AG04450 (cell line): ENCODE measurements at regions of chr9 and their contacts with region 1.

Region 1: GRCh38 chr9:115117999-115118878 is at the start of gene TNC:
- DNase-seq: peak; percentile 79
- H3K4me3 ChIP-seq: peak within 1 kb of the TSS; percentile 77
- H3K27ac ChIP-seq: peak within 1 kb of the TSS; percentile 92
- H3K27me3 ChIP-seq: no peaks in the 10 kb centered on the region
- CTCF ChIP-seq: no peak
- polyA plus RNA-seq, gene TNC: 265 and 319 TPM in 2 replicates

Region 2: DNA sequence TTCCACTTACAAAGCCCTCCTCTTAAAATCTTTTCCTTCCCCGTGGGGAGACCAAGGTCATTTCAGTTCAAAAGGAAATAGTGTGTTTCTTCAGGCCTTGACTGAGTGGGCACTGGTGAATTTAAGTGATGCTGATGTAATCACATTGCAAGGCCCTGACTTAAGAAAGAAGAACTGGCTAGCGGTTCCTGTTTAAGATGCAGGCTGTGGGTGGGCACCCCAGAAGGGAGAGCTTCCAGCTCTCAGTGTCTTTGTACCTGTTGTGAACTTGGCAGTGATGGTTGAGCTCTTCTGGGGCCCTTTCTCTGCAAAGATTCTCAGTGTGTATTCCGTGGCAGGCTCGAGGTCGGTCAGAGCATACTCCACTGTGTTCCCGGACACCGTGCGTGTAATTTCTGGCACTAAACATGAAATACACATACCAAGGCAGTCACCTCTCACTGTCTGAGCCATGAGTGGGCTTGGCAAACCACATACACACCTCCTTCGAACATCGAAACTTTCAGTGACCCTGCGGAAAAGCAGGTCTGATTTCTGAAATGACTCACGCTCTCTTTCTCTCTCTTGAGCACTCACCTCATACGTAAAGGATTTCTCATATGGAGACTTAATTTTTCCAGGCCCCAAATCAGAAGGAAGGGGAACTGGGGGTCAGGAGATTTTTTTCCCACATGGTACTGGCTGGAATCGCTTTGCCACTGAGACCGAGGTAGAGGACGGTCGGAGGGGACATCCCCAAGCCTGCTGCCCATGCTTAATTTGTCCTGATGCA is 82.2 kb before region 1 on chr9:
- CTCF ChIA-PET with region 1: no interaction called
- POLR2A ChIA-PET with region 1: no interaction called
- DNase-seq: peak; percentile 47
- H3K4me3 ChIP-seq: no peak overlapping the region
- H3K27ac ChIP-seq: peak overlapping the region; percentile 55
- H3K27me3 ChIP-seq: no peaks in the 10 kb centered on the region
- CTCF ChIP-seq: no peak

Region 3: GRCh38 chr9:115132648-115133047 is 14.4 kb after region 1 on chr9:
- CTCF ChIA-PET with region 1: interaction called, 3 read pairs
- POLR2A ChIA-PET with region 1: interaction called, 40 read pairs
- DNase-seq: peak; percentile 62
- H3K4me3 ChIP-seq: peak overlapping the region; percentile 38
- H3K27ac ChIP-seq: peak overlapping the region; percentile 90
- H3K27me3 ChIP-seq: no peaks in the 10 kb centered on the region
- CTCF ChIP-seq: no peak

Region 4: GRCh38 chr9:115182264-115182663 is 64.0 kb after region 1 on chr9:
- CTCF ChIA-PET with region 1: no interaction called
- POLR2A ChIA-PET with region 1: no interaction called
- DNase-seq: no peak
- H3K4me3 ChIP-seq: no peak overlapping the region
- H3K27ac ChIP-seq: no peak overlapping the region
- H3K27me3 ChIP-seq: no peaks in the 10 kb centered on the region
- CTCF ChIP-seq: no peak